ENCODE measurements at regions of chrX and their contacts with region 1.

Region 1: GRCh38 chrX:136694431-136695087 is 46.6 kb downstream of the CD40LG start:
- DNase-seq: peak; percentile 74
- H3K4me3 ChIP-seq: no peak overlapping the region
- H3K27ac ChIP-seq: peak overlapping the region; percentile 10
- H3K4me1 ChIP-seq: no peaks in the 10 kb centered on the region
- H3K27me3 ChIP-seq: no peaks in the 10 kb centered on the region
- CTCF ChIP-seq: peak; percentile 78

Region 2: GRCh38 chrX:136162831-136163570 is 531.6 kb before region 1 on chrX:
- CTCF ChIA-PET with region 1: no interaction called
- POLR2A ChIA-PET with region 1: no interaction called
- intact Hi-C with region 1: loop called (anchors 10 kb)
- DNase-seq: peak; percentile 66
- H3K4me3 ChIP-seq: no peak overlapping the region
- H3K27ac ChIP-seq: no peak overlapping the region
- H3K4me1 ChIP-seq: no peaks in the 10 kb centered on the region
- H3K27me3 ChIP-seq: no peaks in the 10 kb centered on the region
- CTCF ChIP-seq: peak; percentile 73

Region 3: GRCh38 chrX:136496770-136497598 is 197.6 kb before region 1 on chrX and contains the start of gene HTATSF1:
- CTCF ChIA-PET with region 1: no interaction called
- POLR2A ChIA-PET with region 1: no interaction called
- intact Hi-C with region 1: loop called (anchors 10 kb)
- DNase-seq: peak; percentile 93
- H3K4me3 ChIP-seq: peak within 1 kb of the TSS; percentile 67
- H3K27ac ChIP-seq: peak within 1 kb of the TSS; percentile 88
- H3K4me1 ChIP-seq: no peaks in the 10 kb centered on the region
- H3K27me3 ChIP-seq: no peaks in the 10 kb centered on the region
- CTCF ChIP-seq: no peak
- total RNA-seq, gene HTATSF1: 72.3 and 79.3 TPM in 2 replicates

Region 4: DNA sequence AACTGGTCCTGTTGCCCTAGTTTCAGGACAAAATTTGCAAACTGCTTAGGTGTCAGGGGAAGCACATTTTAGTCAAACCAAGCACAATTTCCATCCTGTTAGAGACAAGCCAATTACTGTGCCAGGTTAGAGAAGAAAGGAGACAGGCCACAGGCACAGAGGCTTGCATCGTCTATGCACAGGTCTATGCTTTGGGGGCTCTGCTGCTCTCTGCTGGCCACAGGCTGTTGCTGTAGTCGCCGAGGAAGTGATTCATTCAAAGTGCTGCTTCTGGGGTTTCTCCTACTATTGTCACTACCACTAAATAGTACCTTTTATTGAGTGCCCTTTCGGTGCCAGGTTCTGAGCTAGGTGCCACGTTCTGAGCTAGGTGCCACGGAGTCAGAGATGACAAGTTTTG is 117.0 kb before region 1 on chrX:
- CTCF ChIA-PET with region 1: no interaction called
- POLR2A ChIA-PET with region 1: no interaction called
- intact Hi-C with region 1: loop called (anchors 10 kb)
- DNase-seq: peak; percentile 61
- H3K4me3 ChIP-seq: no peak overlapping the region
- H3K27ac ChIP-seq: no peak overlapping the region
- H3K4me1 ChIP-seq: no peaks in the 10 kb centered on the region
- H3K27me3 ChIP-seq: no peaks in the 10 kb centered on the region
- CTCF ChIP-seq: peak; percentile 78

Region 5: DNA sequence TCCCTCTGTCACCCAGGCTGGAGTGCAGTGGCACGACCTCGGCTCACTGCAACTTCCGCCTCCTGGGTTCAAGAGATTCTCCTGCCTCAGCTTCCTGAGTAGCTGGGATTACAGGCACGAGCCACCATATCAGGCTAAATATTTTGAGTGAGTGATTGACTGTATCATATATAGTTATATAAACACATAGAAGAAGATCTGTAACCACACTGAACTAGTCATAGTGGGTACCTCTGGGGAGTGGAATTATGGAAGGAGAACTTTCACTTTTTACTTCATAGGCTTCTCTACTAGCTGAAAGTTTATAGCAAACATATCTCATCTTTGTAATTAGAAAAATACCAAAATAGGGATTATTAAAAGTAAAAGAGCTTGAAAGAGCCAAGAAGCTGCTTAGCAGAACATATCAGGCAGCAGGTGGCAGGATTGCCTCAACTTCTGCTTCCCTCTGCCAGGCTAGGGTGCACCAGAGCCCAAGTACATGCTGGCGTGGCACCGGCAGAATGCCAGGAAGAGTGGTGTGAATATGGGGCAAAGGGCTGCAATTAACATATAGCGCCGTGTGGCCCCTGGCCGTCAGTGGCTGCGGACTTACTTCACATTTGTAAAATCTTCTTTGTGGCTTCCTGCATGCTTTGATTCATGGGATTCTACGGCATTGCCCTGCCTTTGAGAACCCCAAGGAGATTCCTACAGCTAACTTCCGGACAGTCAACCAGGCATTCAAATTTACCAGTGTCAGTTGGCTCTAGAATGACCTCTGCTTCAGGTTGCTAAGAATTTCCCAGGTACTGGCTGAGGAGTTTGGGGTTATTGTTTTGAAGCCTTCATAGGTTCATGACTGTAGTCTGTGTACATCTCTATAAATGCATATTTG is 86.0 kb before region 1 on chrX:
- CTCF ChIA-PET with region 1: interaction called, 6 read pairs
- POLR2A ChIA-PET with region 1: no interaction called
- intact Hi-C with region 1: loop called (anchors 1 kb)
- DNase-seq: peak; percentile 52
- H3K4me3 ChIP-seq: no peak overlapping the region
- H3K27ac ChIP-seq: no peak overlapping the region
- H3K4me1 ChIP-seq: peaks cover 18% of the 10 kb centered on the region
- H3K27me3 ChIP-seq: no peaks in the 10 kb centered on the region
- CTCF ChIP-seq: peak; percentile 56